AG04449 (cell line): ENCODE measurements at regions of chr12 and their contacts with region 1.

Region 1: DNA sequence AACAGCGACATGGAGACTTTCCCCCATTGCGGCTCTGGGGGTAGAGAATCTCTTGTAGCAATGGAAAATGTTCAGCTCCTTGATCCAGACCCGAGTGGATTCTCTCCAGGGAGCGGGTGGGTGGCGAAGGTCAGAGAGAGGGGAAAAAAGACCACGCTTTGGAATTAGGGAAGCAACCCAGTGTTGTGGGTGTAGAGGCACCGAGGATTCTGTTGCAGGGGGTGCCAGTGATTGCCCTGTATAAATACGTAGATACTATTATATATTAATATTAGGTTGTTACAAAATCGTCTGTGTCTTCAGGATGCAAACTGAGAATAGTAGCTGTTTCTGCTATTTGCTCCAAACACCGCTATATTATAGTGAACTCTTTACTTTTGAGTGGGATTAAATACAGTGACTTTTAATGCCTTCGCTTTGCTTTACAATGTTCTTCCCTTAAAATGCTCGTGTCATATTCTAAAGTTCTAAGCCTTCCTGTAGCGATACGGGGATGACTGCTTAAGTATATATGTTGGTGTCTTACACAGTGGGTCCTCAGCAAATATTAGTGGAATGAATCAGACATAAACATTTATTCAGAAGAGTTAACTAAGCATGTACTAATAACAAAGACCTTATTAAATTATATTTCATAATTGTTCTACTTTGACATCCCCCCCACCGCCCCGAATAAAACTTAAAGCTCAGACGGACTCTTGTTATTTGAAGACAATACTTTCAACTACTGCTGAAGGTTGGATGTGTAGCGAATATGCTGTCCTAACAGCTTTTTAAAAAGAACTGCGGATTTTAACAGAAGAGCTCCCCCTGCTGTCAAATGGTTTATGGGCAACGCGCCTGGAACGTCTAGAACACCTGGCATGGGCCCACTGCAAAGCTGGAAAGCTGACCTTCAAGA is 136.4 kb upstream of the KRAS start:
- DNase-seq: peak; percentile 66
- H3K4me3 ChIP-seq: peak overlapping the region; percentile 69
- CTCF ChIP-seq: peak; percentile 68

Region 2: DNA sequence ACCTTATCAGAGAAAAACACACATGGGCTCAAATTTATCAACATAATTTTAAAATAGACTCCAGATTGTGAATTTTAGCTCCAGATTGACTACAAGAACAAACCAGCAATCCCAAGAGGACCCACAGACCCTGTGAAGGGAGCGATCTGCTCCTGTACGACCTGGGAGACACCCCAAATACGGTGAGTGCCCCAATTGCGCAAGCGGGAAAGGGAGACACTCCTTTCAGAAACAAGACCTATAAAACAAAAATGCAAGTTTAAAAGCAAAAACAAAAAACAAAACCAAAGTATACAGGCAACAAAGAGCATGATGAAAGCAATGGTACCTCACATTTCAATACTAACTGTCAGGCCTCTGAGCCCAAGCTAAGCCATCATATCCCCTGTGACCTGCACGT is 224.2 kb before region 1 on chr12:
- CTCF ChIA-PET with region 1: no interaction called
- POLR2A ChIA-PET with region 1: no interaction called
- DNase-seq: no peak
- H3K4me3 ChIP-seq: no peak overlapping the region
- CTCF ChIP-seq: no peak

Region 3: DNA sequence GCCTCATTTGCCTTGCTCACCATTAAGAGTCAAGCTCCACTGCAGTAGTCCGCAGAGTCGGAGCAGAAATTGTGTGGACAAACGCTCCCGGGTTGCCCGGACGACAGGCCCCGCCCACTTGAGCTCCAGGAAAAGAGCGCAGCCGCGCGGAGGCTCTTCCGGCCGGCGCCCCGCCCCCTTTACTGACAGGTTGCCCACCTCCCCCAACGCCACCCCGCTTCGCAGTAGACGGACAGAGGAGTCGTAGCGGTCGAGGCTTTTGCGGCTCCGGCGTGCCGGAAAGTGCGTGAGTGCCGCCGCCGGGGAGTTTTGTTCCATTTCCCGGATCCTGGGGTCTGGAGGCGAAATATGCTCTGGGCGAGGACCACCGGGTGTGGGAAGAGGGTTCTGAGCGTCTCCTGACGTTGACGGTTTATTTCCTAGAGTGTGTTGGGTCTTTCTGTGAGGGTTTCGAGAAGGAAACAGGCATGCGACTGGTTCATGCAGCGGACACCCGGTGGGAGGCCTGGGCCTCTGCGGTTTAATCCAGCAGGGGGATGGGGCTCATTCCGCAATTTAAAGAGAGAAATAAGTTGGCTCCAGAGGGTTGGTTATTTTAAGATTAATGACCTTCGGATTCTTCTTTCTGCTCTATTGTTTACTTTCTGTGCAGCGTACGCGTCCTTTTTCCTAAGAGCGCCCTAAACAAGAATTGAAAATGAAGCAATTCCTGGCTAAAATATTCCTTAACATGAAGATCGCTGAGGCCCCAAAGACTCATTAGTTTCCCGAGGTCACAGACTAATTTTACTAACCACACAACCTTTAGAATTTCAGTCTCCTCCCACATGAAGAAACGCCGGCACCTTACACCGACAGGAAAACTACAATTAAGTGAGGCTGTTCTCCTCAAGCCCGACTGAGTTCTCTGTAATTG is 191.8 kb before region 1 on chr12 and contains the starts of genes DNAI7 and ETFRF1:
- CTCF ChIA-PET with region 1: interaction called, 11 read pairs
- POLR2A ChIA-PET with region 1: interaction called, 3 read pairs
- DNase-seq: peak; percentile 45
- H3K4me3 ChIP-seq: peak within 1 kb of the TSS; percentile 87
- CTCF ChIP-seq: no peak

Region 4: DNA sequence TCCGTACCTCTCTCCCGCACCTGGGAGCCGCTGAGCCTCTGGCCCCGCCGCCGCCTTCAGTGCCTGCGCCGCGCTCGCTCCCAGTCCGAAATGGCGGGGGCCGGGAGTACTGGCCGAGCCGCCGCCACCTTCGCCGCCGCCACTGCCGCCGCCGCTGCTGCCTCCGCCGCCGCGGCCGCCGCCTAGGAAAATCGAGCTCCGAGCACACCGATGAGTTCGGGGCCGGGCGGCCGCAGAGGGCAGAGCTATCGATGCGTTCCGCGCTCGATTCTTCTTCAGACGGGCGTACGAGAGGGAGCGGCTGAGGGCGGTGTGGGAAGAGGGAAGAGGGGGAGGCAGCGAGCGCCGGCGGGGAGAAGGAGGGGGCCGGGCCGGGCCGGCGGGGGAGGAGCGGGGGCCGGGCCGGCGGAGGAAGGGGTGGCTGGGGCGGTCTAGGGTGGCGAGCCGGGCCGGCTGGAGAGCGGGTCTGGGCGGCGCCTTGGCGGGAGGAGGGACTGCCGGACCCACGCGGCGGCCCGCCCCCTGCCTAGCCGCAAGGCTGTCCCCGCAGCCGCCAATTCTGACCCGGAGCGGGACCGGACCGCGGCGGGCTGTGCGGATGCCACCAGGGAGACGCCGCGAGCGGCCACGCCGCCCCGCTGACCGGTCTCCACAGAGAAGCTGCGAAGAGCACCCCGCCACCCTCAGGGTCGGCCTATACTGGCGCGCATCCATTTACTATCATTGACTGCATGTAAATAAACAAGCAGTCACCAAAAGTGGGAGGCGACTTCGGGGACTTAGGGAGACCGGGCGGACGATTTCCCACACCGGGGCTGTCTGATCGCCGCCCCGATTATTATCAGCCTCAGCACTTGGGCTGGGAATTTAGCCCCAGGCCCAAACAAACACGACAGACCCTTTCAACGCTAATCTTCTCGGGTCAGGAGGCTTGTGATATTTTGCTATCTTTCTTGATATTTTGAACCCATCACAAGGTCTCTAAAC is 136.0 kb before region 1 on chr12 and contains the start of gene KRAS:
- CTCF ChIA-PET with region 1: interaction called, 6 read pairs
- POLR2A ChIA-PET with region 1: interaction called, 12 read pairs
- DNase-seq: peak; percentile 92
- H3K4me3 ChIP-seq: peak within 1 kb of the TSS; percentile 93
- CTCF ChIP-seq: no peak